ENCODE measurements at regions of chr6 and their contacts with region 1.

Region 1: DNA sequence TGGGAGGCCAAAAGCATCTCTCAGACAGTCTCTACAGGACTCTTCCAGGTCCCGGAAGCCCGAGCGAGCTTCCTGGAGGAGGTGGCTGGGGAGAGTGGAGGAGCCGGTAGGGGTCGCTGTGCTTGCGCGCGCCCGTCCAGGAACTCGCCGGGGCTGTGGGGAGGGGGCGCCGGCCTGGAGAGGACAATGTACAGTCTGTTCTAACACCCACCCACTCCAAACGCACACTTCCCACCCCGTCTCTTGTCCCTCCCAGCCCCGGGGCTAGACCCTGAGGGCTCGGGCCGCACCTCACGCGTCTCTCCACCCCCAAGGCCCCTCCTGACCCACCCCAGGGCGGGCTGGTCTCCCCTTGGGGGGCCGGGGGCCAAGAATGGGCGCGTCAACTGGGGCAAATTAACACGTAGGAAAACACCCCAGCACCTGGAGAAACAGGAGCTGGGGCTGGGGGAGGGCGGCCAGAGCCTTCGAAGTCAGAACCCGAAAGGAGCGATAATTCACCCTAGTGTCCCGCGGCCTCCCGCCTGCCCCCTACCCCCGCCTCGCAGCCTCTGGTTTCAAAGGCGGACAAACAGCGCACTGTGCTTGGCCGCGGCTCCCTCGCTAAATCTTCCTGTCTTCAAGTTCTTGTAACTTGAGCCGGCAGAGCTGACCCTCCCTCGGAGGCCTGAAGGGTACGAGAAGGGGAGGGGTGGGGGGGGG is 103.2 kb upstream of the FOXP4 start:
- DNase-seq: peak; percentile 86
- ATAC-seq: peak; percentile 83
- H3K4me3 Mint-ChIP-seq: peak overlapping the region; percentile 60
- H3K27ac Mint-ChIP-seq: 0 out of 2 replicates have a peak overlapping the region, but pooled peaks have one; percentile 66
- H3K4me1 Mint-ChIP-seq: peaks cover 49% of the 10 kb centered on the region
- H3K27me3 Mint-ChIP-seq: peaks cover 54% of the 10 kb centered on the region
- CTCF ChIP-seq: peak; percentile 96

Region 2: DNA sequence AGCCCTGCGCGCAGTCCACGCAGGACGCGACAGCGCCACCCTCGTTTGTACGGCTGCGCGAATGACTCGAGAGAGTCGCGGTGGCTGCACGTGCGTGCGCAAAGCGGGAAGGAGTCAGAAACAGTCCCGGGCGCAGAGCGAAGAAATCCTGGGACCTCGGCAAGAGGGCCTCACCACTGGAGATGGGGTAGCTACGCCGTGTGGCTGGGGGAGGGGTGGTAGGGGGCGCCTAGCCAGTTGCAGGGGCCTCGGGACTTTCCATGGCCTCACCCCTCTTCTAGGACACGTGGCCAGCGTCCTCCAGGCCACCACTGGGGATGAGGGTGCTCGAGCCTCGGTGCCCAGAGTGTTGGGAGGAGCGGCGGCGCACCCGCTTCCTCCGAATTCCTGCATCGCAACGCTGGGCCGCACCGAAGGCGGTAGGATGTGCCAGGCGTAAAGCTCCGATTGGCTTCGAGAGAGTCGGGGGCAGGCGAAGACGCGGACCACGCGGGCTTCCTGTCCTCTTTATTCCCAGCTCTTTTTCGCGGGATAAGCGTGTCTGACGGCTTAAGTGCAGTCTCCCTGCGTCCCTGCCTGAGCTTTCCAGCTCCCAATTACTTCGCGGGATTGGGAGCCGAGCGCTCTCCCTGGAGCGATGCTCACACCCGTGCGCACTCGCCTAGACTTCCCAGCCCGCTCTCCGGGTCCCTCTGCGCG is 68.9 kb before region 1 on chr6:
- CTCF ChIA-PET with region 1: interaction called, 21 read pairs
- POLR2A ChIA-PET with region 1: no interaction called
- DNase-seq: peak; percentile 72
- ATAC-seq: peak; percentile 29
- H3K4me3 Mint-ChIP-seq: peak overlapping the region; percentile 65
- H3K27ac Mint-ChIP-seq: no peak overlapping the region
- H3K4me1 Mint-ChIP-seq: peaks cover 50% of the 10 kb centered on the region
- H3K27me3 Mint-ChIP-seq: peaks cover 99% of the 10 kb centered on the region
- CTCF ChIP-seq: no peak

Region 3: GRCh38 chr6:41455818-41456217 is 12.9 kb after region 1 on chr6:
- CTCF ChIA-PET with region 1: interaction called, 41 read pairs
- POLR2A ChIA-PET with region 1: interaction called, 3 read pairs
- DNase-seq: no peak
- ATAC-seq: no peak
- H3K4me3 Mint-ChIP-seq: no peak overlapping the region
- H3K27ac Mint-ChIP-seq: no peak overlapping the region
- H3K4me1 Mint-ChIP-seq: peaks cover 38% of the 10 kb centered on the region
- H3K27me3 Mint-ChIP-seq: peaks cover 9% of the 10 kb centered on the region
- CTCF ChIP-seq: no peak

Region 4: DNA sequence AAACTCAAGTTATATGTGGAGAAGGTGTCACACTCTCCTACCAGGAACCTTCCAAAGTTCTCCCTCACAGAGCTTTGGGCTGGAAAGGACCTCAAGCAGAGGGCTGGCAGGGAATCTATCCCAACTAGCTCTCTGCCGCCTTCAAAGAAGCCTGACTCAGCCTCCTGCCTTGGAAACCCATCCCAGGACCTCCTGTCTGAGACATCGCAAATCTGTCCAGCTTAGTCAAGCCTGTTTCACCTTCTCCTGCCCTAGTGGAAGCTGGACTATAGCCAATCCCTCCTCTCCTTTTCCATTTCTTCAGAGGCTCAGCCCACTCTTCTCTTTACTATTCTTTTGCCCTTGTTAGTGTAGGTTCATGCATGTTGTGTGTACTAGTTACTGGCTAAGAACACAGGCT is 55.0 kb after region 1 on chr6:
- CTCF ChIA-PET with region 1: interaction called, 10 read pairs
- POLR2A ChIA-PET with region 1: no interaction called
- DNase-seq: no peak
- ATAC-seq: no peak
- H3K4me3 Mint-ChIP-seq: no peak overlapping the region
- H3K27ac Mint-ChIP-seq: no peak overlapping the region
- H3K4me1 Mint-ChIP-seq: peaks cover 28% of the 10 kb centered on the region
- H3K27me3 Mint-ChIP-seq: peaks cover 88% of the 10 kb centered on the region
- CTCF ChIP-seq: no peak

Region 5: GRCh38 chr6:41560431-41561192 is 117.7 kb after region 1 on chr6:
- CTCF ChIA-PET with region 1: interaction called, 22 read pairs
- POLR2A ChIA-PET with region 1: no interaction called
- DNase-seq: peak; percentile 79
- ATAC-seq: peak; percentile 60
- H3K4me3 Mint-ChIP-seq: peak overlapping the region; percentile 79
- H3K27ac Mint-ChIP-seq: no peak overlapping the region
- H3K4me1 Mint-ChIP-seq: peaks cover 74% of the 10 kb centered on the region
- H3K27me3 Mint-ChIP-seq: peaks cover 43% of the 10 kb centered on the region
- CTCF ChIP-seq: no peak

Region 6: GRCh38 chr6:41602864-41603608 is 160.1 kb after region 1 on chr6:
- CTCF ChIA-PET with region 1: interaction called, 14 read pairs
- POLR2A ChIA-PET with region 1: no interaction called
- DNase-seq: peak; percentile 88
- ATAC-seq: peak; percentile 66
- H3K4me3 Mint-ChIP-seq: peak overlapping the region; percentile 61
- H3K27ac Mint-ChIP-seq: no peak overlapping the region
- H3K4me1 Mint-ChIP-seq: peaks cover 36% of the 10 kb centered on the region
- H3K27me3 Mint-ChIP-seq: no peaks in the 10 kb centered on the region
- CTCF ChIP-seq: peak; percentile 79

Measured in WTC11 (cell line).